Activated T-helper 2 cell treated with anti-CD3 and anti-CD28 coated beads, Interferon-gamma antibody, Interleukin-2, Interleukin-4, amounts not matched to agents 10 μg/mL and 5 μg/mL and 100 μg/mL, durations not matched to agents 14 hours and 24 hours and 36 hours (primary cell): ENCODE measurements at regions of chr12 and their contacts with region 1.

Region 1: DNA sequence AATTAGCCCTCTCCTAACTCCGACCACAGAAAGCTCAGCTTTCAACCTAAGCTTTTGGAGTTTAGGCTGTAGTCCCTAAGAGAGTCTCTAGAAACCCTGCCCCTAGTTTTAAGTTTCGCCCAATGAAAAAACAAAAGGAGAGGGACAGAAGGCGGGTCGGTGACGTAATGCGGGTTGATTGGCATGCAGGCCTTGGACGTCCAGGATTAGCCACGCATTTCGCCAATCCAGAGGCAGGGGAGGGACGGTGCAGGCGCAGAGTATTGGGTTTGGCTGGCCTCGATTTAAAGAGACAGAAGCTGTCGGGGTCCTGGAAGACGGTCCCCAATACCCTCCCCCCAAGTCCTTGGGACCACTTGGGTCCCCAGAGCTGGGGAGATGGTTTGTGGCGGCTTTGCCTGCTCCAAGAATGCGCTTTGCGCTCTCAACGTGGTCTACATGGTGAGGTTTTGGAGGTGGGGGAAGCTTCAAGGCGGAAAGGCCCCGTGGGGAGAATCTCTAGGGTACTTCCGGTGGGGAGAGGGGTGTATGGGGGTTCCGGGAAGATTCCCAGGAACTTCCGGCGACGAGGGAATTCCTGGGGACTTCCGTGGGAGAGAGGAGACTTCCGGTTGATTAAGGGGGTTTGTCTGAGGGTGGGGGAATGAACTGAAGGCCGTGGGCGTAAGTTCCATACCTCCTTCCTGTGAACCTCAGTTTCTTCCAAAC is at the start of gene TSPAN31:
- DNase-seq: peak; percentile 91
- H3K4me3 Mint-ChIP-seq: peak within 1 kb of the TSS; percentile 89
- H3K27ac Mint-ChIP-seq: peak within 1 kb of the TSS; percentile 93
- H3K4me1 Mint-ChIP-seq: peaks cover 38% of the 10 kb centered on the region
- H3K27me3 Mint-ChIP-seq: no peaks in the 10 kb centered on the region
- total RNA-seq, gene TSPAN31: 23.9 and 27.0 TPM in 2 replicates

Region 2: GRCh38 chr12:57487597-57488401 is 257.1 kb before region 1 on chr12 and contains the start of gene MARS1:
- intact Hi-C with region 1: loop called (anchors 5 kb)
- DNase-seq: peak; percentile 92
- H3K4me3 Mint-ChIP-seq: peak within 1 kb of the TSS; percentile 99
- H3K27ac Mint-ChIP-seq: peak within 1 kb of the TSS; percentile 95
- H3K4me1 Mint-ChIP-seq: peaks cover 25% of the 10 kb centered on the region
- H3K27me3 Mint-ChIP-seq: no peaks in the 10 kb centered on the region
- total RNA-seq, gene MARS1: 249 and 257 TPM in 2 replicates

Region 3: GRCh38 chr12:57583008-57583831 is 161.7 kb before region 1 on chr12:
- intact Hi-C with region 1: loop called (anchors 2 kb)
- DNase-seq: peak; percentile 60
- H3K4me3 Mint-ChIP-seq: no peak overlapping the region
- H3K27ac Mint-ChIP-seq: no peak overlapping the region
- H3K4me1 Mint-ChIP-seq: peaks cover 2% of the 10 kb centered on the region
- H3K27me3 Mint-ChIP-seq: peaks cover 2% of the 10 kb centered on the region

Region 4: GRCh38 chr12:57632694-57633477 is 112.0 kb before region 1 on chr12 and contains the start of gene B4GALNT1:
- intact Hi-C with region 1: loop called (anchors 5 kb)
- DNase-seq: peak; percentile 58
- H3K4me3 Mint-ChIP-seq: peak within 1 kb of the TSS; percentile 74
- H3K27ac Mint-ChIP-seq: no peak within 1 kb of the TSS
- H3K4me1 Mint-ChIP-seq: peaks cover 4% of the 10 kb centered on the region
- H3K27me3 Mint-ChIP-seq: peaks cover 62% of the 10 kb centered on the region
- total RNA-seq, gene B4GALNT1: 10.8 and 11.3 TPM in 2 replicates

Region 5: GRCh38 chr12:57693659-57694458 is 51.1 kb before region 1 on chr12 and contains the start of gene OS9:
- intact Hi-C with region 1: loop called (anchors 2 kb)
- DNase-seq: peak; percentile 96
- H3K4me3 Mint-ChIP-seq: no peak within 1 kb of the TSS
- H3K27ac Mint-ChIP-seq: no peak within 1 kb of the TSS
- H3K4me1 Mint-ChIP-seq: no peaks in the 10 kb centered on the region
- H3K27me3 Mint-ChIP-seq: peaks cover 13% of the 10 kb centered on the region
- total RNA-seq, gene OS9: 97.4 and 99.1 TPM in 2 replicates

Region 6: GRCh38 chr12:57918147-57918546 is 173.2 kb after region 1 on chr12:
- intact Hi-C with region 1: no loop called
- DNase-seq: no peak
- H3K4me3 Mint-ChIP-seq: no peak overlapping the region
- H3K27ac Mint-ChIP-seq: no peak overlapping the region
- H3K4me1 Mint-ChIP-seq: no peaks in the 10 kb centered on the region
- H3K27me3 Mint-ChIP-seq: peaks cover 29% of the 10 kb centered on the region